Left ventricle myocardium superior (tissue), 1 donor: ENCODE measurements at regions of chr9 and their contacts with region 1.

Region 1: DNA sequence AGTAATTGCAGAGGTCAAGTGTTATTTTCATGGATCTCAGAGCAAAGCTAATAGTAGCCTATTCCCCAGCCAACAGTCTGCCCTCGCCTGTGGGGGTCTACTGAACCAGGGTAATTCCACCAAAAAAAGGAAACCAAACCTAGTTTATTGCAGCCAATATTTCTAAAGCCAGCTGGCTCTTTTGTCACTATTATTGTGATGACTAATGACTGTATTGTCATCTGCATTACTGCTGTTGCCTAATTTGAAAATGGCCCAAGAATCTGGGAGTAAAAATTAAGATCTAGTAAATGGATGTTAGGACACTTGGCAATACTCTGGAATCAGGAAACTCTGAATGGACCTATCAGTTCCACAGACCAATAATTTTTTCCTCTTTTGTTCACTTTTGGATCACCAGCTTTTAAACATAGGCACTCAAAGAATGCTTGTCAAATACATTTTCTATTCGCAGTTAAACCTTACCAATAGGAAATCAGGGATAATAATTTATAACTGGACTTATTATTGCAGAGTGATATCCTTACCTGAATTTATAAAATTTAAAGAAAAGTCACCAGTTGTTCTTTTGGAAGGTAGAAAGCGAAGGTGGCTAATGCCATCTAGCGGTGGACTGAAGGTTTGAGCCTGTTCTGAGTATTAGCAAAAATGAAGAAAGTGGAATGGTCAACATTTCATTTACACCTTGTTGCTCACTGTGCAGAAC is 69.2 kb downstream of the SYK start:
- DNase-seq: no peak
- ATAC-seq: peak; percentile 36

Region 2: GRCh38 chr9:90142580-90142979 is 728.2 kb before region 1 on chr9:
- intact Hi-C with region 1: loop called (anchors 10 kb)
- DNase-seq: no peak
- ATAC-seq: no peak

Region 3: GRCh38 chr9:90698871-90699430 is 171.8 kb before region 1 on chr9:
- intact Hi-C with region 1: no loop called
- DNase-seq: no peak
- ATAC-seq: no peak

Region 4: DNA sequence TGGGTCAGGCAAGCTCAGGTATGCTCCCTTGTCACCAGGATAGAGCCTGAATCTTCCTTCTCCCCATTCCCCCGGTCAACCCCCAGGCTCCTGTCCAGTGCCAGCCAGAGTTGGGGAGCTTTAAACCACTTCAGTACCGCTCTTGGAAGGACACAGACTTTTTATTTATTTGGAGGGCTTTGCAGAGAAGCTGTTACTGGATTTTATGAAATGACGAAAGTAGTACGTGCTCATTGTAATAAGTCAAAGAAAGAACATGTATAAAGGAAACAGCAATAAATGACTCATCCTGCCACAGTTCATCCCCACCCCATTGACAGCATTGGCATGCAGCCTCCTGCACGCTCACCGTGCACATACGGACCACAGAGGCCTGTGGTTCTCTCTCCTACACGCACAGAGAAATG is 260.7 kb after region 1 on chr9:
- intact Hi-C with region 1: no loop called
- DNase-seq: no peak
- ATAC-seq: no peak

Region 5: GRCh38 chr9:91334053-91334452 is 463.3 kb after region 1 on chr9:
- intact Hi-C with region 1: no loop called
- DNase-seq: no peak
- ATAC-seq: no peak